Ovary (tissue), 10 donors: ENCODE measurements at regions of chr9 and their contacts with region 1.

Region 1: DNA sequence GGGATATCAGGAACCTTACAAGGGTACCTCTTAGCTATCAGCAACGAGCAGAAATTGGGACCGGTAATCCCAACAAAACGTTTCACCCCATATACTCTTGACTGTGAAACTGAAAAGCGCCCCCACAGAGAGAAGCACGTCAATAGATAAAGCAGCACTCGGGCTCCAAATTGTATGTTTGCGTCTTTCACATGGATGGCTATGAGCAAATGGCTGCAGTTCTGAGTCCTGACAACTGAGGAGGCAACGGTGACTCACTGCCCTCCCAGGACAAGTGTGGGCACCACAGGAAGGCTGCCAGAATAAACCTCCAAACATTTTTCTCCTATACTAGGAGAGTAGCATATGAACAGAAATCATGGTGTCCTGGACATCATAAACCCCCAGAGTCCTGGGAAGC is 36.6 kb downstream of the SEMA4D start:
- DNase-seq: no peak
- H3K4me3 ChIP-seq: no peak overlapping the region
- H3K27ac ChIP-seq: no peak overlapping the region
- H3K4me1 ChIP-seq: no peaks in the 10 kb centered on the region
- H3K27me3 ChIP-seq: no peaks in the 10 kb centered on the region
- CTCF ChIP-seq: no peak
- EP300 ChIP-seq: no peak
- POLR2A ChIP-seq: no peak

Region 2: DNA sequence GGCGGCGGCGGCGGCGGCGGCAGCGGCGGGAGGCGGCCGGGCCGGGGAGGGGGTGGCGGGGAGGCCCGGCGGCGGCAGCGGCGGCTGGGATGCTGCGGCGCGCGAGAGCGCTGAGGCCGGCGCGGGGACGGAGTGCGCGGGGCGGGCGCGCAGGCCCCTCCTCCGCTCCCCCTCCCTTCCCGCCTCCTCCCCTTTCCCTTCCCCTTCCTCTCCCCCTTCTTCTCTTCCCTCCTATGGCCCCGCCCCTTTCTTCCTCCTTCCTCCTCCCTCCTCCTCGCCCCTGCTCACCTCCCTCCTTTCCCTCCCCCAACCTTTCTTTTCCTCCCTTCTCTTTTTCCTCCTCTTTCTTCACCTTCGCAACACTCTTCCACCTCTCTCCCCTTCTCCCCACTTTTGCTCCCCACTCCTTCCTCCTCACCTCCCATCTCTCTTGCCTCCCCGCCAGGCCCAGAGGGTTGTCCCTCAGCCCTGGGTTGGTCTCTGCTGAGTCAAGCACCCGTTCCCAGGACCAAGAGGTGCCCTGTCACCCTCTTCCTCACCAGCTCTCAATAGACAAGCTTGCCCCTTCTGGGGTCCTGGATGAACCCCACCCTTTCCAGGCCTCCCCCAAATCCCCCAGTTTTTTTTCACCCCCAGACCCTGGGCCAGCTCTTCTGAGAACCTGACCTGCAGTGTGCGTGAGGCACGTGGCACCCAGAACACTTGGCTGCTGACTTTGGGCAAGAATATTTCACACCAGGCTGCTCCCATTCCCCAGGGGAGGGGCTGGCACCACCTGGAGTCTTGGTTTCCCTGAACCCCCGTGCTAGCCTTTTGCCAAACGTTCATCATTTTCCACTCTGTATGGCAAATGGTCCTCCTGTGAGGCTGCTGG is 37.0 kb after region 1 on chr9 and contains the start of gene SEMA4D:
- intact Hi-C with region 1: loop called in 1 of 4 experiments (anchors 5 kb)
- DNase-seq: peak; percentile 72 to 85 (median 81)
- H3K4me3 ChIP-seq: peak within 1 kb of the TSS; percentile 77
- H3K27ac ChIP-seq: peak within 1 kb of the TSS in 1 of 2 donors; percentile 68
- H3K4me1 ChIP-seq: peaks cover 6% of the 10 kb centered on the region
- H3K27me3 ChIP-seq: no peaks in the 10 kb centered on the region
- CTCF ChIP-seq: no peak
- EP300 ChIP-seq: no peak
- POLR2A ChIP-seq: no peak
- total RNA-seq, gene SEMA4D: 11.1 to 27.2 (median 17.9) TPM